ENCODE measurements at regions of chr15 and their contacts with region 1.

Region 1: GRCh38 chr15:70783599-70784022 is 20.3 kb upstream of the UACA start:
- DNase-seq: no peak

Region 2: DNA sequence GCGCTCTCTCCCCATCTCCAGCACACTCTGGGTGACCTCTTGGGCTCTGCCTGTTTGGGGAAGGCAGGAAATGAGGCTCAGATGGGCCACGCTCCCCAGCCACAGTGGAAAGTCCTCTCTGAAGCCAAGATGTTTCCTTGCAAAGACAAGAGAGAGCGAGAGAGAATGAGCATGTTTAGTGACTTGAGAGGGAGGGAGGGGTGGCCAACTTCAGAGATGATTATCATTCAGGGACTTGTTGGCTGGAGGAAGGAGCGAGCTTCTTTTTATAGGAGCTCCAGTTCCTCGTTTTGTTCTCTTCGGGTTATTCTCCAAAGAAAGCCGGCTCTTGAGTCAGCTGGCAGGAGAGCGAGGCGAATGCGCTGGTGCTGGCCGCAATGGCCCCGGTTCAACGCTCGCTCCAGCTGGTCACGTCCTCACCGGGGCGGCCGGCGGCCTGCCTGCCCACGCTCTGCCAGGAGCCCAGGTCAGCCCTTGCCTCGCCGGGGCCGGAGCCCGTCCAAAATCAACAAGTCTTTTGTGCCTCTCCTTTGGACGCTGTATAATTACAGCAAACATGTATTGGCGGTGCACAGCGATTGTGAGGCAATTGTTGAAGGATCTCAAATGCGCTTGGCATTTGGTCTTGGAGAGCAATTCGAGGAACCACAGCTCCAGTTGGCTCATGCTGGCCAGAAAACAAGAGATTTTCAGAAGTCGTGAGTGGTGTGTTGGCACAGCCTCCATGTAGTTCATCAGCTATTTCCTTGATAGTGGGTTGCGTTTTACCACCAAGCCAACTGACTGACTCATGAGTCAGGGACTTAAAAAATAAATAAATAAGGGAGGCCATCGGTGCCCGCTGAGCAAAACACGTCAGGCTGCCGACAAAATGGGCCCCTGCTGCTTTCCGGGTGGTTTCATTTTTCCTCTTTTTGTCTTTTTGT is 308.9 kb before region 1 on chr15:
- intact Hi-C with region 1: no loop called
- DNase-seq: peak in 9 of 10 donors; percentile 26 to 91 (median 52)

Region 3: DNA sequence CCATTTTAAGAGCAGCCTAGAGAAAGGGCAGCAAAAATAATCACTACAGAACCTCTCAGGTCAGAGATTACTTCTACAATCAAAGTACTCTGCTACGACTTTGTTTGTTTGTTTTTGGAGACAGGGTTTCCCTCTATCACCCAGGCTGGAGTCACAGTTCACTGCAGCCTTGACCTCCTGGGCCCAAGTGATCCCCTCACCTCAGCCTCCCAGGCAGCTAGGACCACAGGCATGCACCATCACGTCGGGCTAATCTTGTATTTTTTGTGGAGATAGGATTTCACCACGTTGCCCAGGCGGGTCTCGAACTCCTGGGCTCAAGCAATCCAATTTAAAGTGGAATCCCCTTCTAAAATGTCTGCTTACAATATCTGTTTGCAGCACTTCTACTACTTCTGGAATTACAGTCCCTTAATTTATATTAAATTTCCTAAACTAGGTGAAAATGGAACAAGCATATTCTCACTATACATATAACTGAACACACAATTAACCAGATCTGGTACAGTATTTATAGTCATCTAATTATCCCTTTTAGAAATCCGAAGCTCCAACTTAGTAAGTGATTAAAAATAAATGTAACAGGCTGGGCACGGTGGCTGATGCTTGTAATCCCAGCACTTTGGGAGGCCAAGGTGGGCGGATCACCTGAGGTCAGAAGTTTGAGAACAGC is 24.7 kb before region 1 on chr15:
- intact Hi-C with region 1: loop called (anchors 1 kb)
- DNase-seq: no peak

Region 4: GRCh38 chr15:70815644-70816043 is 32.0 kb after region 1 on chr15:
- intact Hi-C with region 1: no loop called
- DNase-seq: no peak

Measured in posterior cingulate gyrus (tissue), 11 donors.